PC-3 (cell line): ENCODE measurements at regions of chrX and their contacts with region 1.

Region 1: DNA sequence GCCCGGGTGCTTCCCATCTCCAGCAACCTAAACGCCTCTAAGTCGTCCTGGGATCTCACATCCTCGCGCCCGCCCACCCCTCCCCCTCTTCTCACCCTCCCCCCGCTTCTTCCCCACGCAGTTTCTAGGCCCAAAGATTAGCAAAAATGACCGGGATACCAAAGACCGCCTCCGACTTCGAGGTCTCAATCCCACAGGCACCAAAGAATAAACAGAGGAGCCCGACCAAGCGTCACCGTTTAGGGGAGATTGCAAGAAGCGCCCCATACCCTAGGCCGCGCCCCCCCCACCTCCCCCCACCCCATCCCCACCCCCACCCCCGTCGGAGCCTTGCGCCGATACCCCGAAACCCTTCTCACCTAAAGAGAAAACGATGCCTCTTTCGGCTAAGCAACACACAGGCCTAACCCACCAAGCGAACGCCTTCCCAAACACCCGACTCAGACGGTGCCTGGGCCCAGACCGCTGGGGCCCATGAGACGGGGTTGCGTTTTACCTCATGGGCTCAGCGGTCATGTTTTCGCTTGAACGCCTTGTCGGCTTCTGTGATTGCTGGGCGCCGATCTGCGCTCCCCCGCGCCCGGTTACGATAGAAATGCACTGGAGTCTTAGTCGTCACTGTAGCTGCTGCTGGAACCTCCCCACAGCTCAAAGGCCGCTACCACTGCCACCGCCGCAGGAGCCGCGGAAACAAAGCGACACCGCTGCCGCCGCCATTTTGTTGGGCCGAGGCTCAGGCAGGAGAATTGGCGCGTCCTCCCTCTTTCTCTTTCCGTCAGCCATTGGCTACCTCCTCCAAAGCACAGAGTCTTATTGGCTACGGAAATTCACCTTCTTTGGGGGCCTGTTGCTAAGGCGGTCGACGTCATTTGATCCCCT is at the start of gene ATRX:
- DNase-seq: peak; percentile 81
- ATAC-seq: peak; percentile 85
- H3K4me3 ChIP-seq: peak within 1 kb of the TSS; percentile 100
- H3K27ac ChIP-seq: peak within 1 kb of the TSS; percentile 88
- H3K4me1 ChIP-seq: peaks cover 22% of the 10 kb centered on the region
- H3K27me3 ChIP-seq: no peaks in the 10 kb centered on the region
- CTCF ChIP-seq: no peak
- total RNA-seq, gene ATRX: 64.0 and 73.0 TPM in 2 replicates

Region 2: DNA sequence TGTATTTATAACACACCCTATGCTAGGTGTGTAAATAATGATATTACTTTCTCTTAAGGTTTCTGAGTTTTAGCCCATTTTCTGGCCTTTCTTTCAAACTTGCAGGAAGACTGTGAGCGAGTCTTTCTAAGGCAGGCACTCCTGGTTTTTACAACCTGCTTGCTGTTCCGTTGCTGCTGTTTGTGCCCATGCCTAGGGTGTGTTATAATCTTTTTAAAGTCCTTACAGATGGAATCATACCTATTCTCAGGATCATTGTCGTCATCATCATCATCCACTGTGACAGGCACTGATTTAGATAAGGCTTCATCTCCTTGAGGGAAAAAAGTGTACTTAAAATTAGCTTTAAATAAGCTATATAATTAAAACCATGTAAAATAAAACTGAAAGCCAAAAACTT is 109.7 kb before region 1 on chrX:
- CTCF ChIA-PET with region 1: no interaction called
- POLR2A ChIA-PET with region 1: no interaction called
- intact Hi-C with region 1: loop called (anchors 10 kb)
- DNase-seq: no peak
- ATAC-seq: no peak
- H3K4me3 ChIP-seq: no peak overlapping the region
- H3K27ac ChIP-seq: no peak overlapping the region
- H3K4me1 ChIP-seq: peaks cover 2% of the 10 kb centered on the region; the same call in 1 of the 2 replicates
- H3K27me3 ChIP-seq: no peaks in the 10 kb centered on the region
- CTCF ChIP-seq: no peak

Region 3: DNA sequence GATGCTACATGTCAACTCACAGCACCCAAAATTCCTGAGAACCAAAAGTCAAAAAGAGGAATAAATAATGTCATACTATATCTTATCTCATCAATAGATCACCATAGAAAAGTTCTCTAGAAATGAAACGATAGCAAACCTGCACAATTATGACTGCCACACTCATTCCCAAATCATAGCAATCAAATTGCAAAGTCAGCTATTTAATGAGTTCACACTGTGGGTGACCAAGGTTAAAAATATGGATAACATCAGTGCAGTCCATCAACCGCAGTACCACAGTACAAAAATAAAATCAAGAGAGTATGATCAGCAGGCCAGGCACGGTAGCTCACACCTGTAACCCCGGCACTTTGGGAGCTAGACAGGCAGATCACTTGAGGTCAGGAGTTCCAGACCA is 62.0 kb before region 1 on chrX:
- CTCF ChIA-PET with region 1: interaction called, 13 read pairs
- POLR2A ChIA-PET with region 1: no interaction called
- intact Hi-C with region 1: no loop called
- DNase-seq: no peak
- ATAC-seq: no peak
- H3K4me3 ChIP-seq: no peak overlapping the region
- H3K27ac ChIP-seq: no peak overlapping the region
- H3K4me1 ChIP-seq: no peaks in the 10 kb centered on the region
- H3K27me3 ChIP-seq: no peaks in the 10 kb centered on the region
- CTCF ChIP-seq: no peak